ENCODE measurements at regions of chr10 and their contacts with region 1.

Region 1: DNA sequence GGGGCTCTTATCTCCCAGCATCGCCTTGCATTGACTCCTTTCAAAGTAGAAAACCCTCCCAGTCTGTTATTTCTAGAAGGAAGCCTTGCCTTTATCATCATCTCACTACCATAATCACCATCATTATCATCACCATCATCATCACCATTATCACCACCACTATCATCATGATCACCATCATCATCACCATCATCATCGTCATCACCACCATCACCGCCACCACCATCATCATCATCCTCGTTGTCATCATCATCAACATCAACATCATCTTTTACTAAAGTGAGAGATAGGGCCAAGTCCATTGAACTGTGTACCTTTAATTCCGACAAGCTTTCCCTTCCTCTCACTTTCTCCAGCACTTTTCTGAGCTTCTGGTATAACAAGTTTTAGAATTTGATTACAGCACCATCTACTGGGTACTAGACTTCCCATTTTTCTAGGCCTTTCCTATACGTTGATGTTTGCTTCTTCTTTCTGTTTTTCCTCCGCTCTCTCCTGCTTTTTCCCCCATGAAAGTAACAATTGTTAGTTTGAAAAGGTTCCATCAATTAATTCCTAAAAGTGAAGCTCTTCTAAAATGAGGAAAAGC is 226.4 kb downstream of the BUB3 start:
- DNase-seq: no peak
- H3K4me3 Mint-ChIP-seq: no peak overlapping the region
- H3K27ac Mint-ChIP-seq: no peak overlapping the region
- H3K4me1 Mint-ChIP-seq: no peaks in the 10 kb centered on the region
- H3K27me3 Mint-ChIP-seq: no peaks in the 10 kb centered on the region

Region 2: GRCh38 chr10:123043409-123043925 is 337.1 kb before region 1 on chr10:
- CTCF ChIA-PET with region 1: interaction called, 5 read pairs
- intact Hi-C with region 1: loop called (anchors 1 kb)
- DNase-seq: peak; percentile 60
- H3K4me3 Mint-ChIP-seq: no peak overlapping the region
- H3K27ac Mint-ChIP-seq: no peak overlapping the region
- H3K4me1 Mint-ChIP-seq: peaks cover 3% of the 10 kb centered on the region
- H3K27me3 Mint-ChIP-seq: no peaks in the 10 kb centered on the region

Region 3: GRCh38 chr10:123139521-123140163 is 240.9 kb before region 1 on chr10:
- CTCF ChIA-PET with region 1: no interaction called
- intact Hi-C with region 1: loop called (anchors 1 kb)
- DNase-seq: no peak
- H3K4me3 Mint-ChIP-seq: peak overlapping the region; percentile 58
- H3K27ac Mint-ChIP-seq: no peak overlapping the region
- H3K4me1 Mint-ChIP-seq: peaks cover 45% of the 10 kb centered on the region
- H3K27me3 Mint-ChIP-seq: peaks cover 82% of the 10 kb centered on the region

Region 4: GRCh38 chr10:123229927-123230632 is 150.5 kb before region 1 on chr10:
- CTCF ChIA-PET with region 1: no interaction called
- intact Hi-C with region 1: loop called (anchors 1 kb)
- DNase-seq: no peak
- H3K4me3 Mint-ChIP-seq: no peak overlapping the region
- H3K27ac Mint-ChIP-seq: no peak overlapping the region
- H3K4me1 Mint-ChIP-seq: no peaks in the 10 kb centered on the region
- H3K27me3 Mint-ChIP-seq: no peaks in the 10 kb centered on the region

Region 5: GRCh38 chr10:123402656-123403055 is 22.1 kb after region 1 on chr10:
- CTCF ChIA-PET with region 1: no interaction called
- intact Hi-C with region 1: no loop called
- DNase-seq: no peak
- H3K4me3 Mint-ChIP-seq: no peak overlapping the region
- H3K27ac Mint-ChIP-seq: no peak overlapping the region
- H3K4me1 Mint-ChIP-seq: no peaks in the 10 kb centered on the region
- H3K27me3 Mint-ChIP-seq: peaks cover 3% of the 10 kb centered on the region

Region 6: GRCh38 chr10:123559066-123559822 is 178.7 kb after region 1 on chr10:
- CTCF ChIA-PET with region 1: no interaction called
- intact Hi-C with region 1: loop called (anchors 5 kb)
- DNase-seq: peak; percentile 72
- H3K4me3 Mint-ChIP-seq: no peak overlapping the region
- H3K27ac Mint-ChIP-seq: no peak overlapping the region
- H3K4me1 Mint-ChIP-seq: no peaks in the 10 kb centered on the region
- H3K27me3 Mint-ChIP-seq: peaks cover 19% of the 10 kb centered on the region